ENCODE measurements at regions of chrX and their contacts with region 1.

Region 1: GRCh38 chrX:85052636-85053343 is 49.1 kb downstream of the APOOL start:
- DNase-seq: peak; percentile 50
- H3K4me3 ChIP-seq: no peak overlapping the region
- H3K27ac ChIP-seq: peak overlapping the region; percentile 2
- H3K4me1 ChIP-seq: peaks cover 12% of the 10 kb centered on the region
- H3K27me3 ChIP-seq: no peaks in the 10 kb centered on the region
- CTCF ChIP-seq: no peak
- POLR2A ChIP-seq: no peak

Region 2: DNA sequence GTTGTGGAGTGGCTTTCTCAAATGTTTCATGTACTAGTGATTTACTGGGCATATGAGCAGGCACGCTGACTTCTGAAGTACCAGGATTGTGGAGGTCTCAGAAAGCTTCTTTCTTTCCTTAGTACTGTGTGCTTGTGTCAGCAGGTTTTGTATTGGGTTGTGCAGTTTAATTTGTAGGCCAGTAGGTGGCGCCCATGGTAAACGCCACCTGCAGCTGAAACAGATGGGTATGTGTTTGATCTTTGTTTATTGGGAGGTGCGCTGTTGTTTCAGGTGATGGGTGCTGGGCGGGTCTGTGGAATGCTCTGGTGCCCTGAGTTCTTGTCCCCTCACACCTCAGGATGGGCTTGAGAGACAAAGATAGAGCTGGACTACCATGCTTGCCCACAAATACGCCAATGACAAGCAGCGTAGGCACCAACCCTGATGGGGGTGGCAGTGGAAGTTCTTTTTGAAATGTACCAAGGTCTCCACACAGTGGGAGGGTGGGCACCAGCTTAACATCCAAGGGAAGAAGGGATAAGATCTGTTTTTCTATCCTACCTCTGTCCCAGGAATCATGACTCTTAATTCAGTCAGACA is 1006.3 kb before region 1 on chrX:
- CTCF ChIA-PET with region 1: interaction called, 51 read pairs
- POLR2A ChIA-PET with region 1: no interaction called
- dilution Hi-C with region 1: no loop called
- intact Hi-C with region 1: loop called (anchors 5 kb)
- DNase-seq: peak; percentile 9
- H3K4me3 ChIP-seq: no peak overlapping the region
- H3K27ac ChIP-seq: no peak overlapping the region
- H3K4me1 ChIP-seq: no peaks in the 10 kb centered on the region
- H3K27me3 ChIP-seq: no peaks in the 10 kb centered on the region
- CTCF ChIP-seq: peak; percentile 43 to 50
- POLR2A ChIP-seq: no peak

Region 3: GRCh38 chrX:84339507-84340364 is 713.1 kb before region 1 on chrX:
- CTCF ChIA-PET with region 1: interaction called, 22 read pairs
- POLR2A ChIA-PET with region 1: no interaction called
- dilution Hi-C with region 1: no loop called
- intact Hi-C with region 1: no loop called
- DNase-seq: peak; percentile 41
- H3K4me3 ChIP-seq: no peak overlapping the region
- H3K27ac ChIP-seq: no peak overlapping the region
- H3K4me1 ChIP-seq: no peaks in the 10 kb centered on the region
- H3K27me3 ChIP-seq: no peaks in the 10 kb centered on the region
- CTCF ChIP-seq: peak; percentile 25 to 43
- POLR2A ChIP-seq: no peak

Region 4: DNA sequence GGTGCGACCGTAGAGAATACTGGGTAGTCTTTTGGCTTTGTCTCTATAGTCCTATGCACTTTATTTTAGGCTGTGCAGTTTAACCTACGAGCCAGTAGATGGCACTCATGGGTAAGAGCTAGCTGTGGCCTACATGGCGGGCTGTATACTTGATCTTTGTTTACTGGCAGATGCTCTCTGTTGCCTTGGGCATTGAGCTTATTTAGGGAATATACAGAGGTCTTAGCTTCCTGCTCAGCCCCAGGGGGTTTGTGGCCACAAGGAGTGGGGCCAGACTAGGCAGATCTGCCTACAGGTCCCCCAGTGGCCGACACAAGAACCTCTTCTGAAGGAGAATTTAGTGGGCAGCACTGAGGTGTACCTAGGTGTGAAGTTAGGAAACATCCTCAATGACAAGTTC is 323.0 kb before region 1 on chrX:
- CTCF ChIA-PET with region 1: interaction called, 27 read pairs
- POLR2A ChIA-PET with region 1: no interaction called
- dilution Hi-C with region 1: no loop called
- intact Hi-C with region 1: no loop called
- DNase-seq: peak; percentile 7
- H3K4me3 ChIP-seq: no peak overlapping the region
- H3K27ac ChIP-seq: no peak overlapping the region
- H3K4me1 ChIP-seq: no peaks in the 10 kb centered on the region
- H3K27me3 ChIP-seq: no peaks in the 10 kb centered on the region
- CTCF ChIP-seq: peak; percentile 27 to 55
- POLR2A ChIP-seq: no peak

Region 5: GRCh38 chrX:85003655-85004244 is 49.0 kb before region 1 on chrX and contains the start of gene APOOL:
- CTCF ChIA-PET with region 1: interaction called, 10 read pairs
- POLR2A ChIA-PET with region 1: no interaction called
- dilution Hi-C with region 1: no loop called
- intact Hi-C with region 1: no loop called
- DNase-seq: peak; percentile 90
- H3K4me3 ChIP-seq: peak within 1 kb of the TSS; percentile 50 to 91 (median 81)
- H3K27ac ChIP-seq: peak within 1 kb of the TSS; percentile 44
- H3K4me1 ChIP-seq: peaks cover 5% of the 10 kb centered on the region
- H3K27me3 ChIP-seq: no peaks in the 10 kb centered on the region
- CTCF ChIP-seq: no peak
- POLR2A ChIP-seq: peak; percentile 42
- total RNA-seq, gene APOOL: 16.4 and 17.4 TPM in 2 replicates

Region 6: DNA sequence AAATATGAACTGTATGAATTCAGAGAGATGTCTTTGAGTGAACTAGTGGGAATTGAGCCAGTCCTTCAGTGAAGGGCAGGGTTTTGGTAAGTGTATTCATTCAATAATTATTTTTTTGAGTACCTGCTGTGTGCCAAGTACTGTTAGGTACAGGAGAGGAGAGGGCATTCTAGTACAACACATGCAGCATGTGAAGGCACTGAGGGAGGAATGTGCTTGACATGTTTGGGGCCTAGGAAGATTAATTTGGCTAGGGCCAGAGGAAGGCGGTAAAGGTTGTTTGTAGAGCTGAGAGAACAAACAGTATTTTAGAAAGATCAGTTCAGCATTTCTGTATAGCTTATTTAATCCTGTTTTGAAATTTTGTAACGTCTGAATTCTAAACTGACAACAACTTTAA is 21.3 kb before region 1 on chrX:
- CTCF ChIA-PET with region 1: no interaction called
- POLR2A ChIA-PET with region 1: no interaction called
- dilution Hi-C with region 1: no loop called
- intact Hi-C with region 1: no loop called
- DNase-seq: no peak
- H3K4me3 ChIP-seq: no peak overlapping the region
- H3K27ac ChIP-seq: no peak overlapping the region
- H3K4me1 ChIP-seq: no peaks in the 10 kb centered on the region
- H3K27me3 ChIP-seq: no peaks in the 10 kb centered on the region
- CTCF ChIP-seq: no peak
- POLR2A ChIP-seq: no peak